PC-9 (cell line): ENCODE measurements at regions of chr15 and their contacts with region 1.

Region 1: DNA sequence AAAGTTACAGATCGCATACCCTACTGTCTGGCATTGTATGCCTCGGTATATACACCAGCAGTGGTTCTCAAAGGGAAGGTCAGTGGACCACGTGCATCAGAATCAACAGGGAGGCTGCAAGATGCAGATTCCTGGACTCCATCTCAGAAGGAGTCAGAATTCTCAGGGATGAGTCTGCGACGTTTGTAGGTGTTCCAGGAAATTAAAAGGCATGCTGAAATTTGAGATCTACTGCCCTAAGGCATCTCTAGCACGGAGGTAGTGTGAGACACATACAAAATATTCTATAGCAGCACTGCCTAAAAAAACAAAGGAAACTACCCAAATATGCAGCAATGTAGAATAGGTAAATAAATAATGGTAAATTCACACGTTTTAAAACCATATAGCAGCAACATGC is 136.8 kb upstream of the BNIP2 start:
- DNase-seq: peak; percentile 53 to 91
- H3K4me3 ChIP-seq: no peak overlapping the region
- H3K27ac ChIP-seq: peak overlapping the region; percentile 93
- H3K4me1 ChIP-seq: peaks cover 52% of the 10 kb centered on the region
- H3K27me3 ChIP-seq: no peaks in the 10 kb centered on the region
- CTCF ChIP-seq: no peak

Region 2: DNA sequence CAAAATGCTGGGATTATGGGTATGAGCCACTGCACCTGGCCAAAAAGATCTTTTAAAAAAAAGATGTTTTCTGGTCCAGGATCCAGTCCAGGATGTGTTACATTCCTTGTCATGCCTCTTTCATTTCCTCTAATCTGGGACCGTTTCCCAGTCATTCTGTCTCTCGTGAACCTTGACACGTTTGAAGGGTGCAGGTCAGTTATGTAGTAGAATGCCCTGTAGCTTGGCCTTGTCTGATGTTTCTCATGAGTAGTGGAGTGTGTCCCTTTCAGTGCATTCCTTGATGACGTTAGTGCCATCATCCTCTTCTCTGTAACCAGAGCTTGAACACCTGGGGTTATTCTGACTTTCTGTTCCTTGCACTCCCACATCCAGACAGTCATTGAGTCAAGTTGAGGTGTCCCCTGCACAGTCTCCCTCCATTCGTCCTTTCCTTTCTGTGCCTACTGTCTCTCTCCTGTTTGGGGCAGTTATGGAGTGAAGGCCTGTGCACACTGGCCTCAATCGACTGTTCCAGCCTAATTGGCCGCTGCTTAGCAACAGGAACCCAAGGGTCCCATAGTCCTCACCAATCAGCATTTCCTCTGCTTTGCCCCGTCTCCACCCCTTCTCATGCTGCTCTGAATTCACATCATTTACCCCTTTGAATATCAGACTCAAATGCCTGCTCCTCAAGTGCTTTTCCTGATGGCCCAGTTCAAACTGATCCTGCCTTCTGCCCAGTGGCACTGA is 382.4 kb before region 1 on chr15:
- CTCF ChIA-PET with region 1: no interaction called
- POLR2A ChIA-PET with region 1: no interaction called
- intact Hi-C with region 1: no loop called
- DNase-seq: no peak
- H3K4me3 ChIP-seq: no peak overlapping the region
- H3K27ac ChIP-seq: no peak overlapping the region
- H3K4me1 ChIP-seq: no peaks in the 10 kb centered on the region
- H3K27me3 ChIP-seq: no peaks in the 10 kb centered on the region
- CTCF ChIP-seq: no peak

Region 3: GRCh38 chr15:59570368-59570767 is 255.5 kb before region 1 on chr15:
- CTCF ChIA-PET with region 1: no interaction called
- POLR2A ChIA-PET with region 1: interaction called, 15 read pairs
- intact Hi-C with region 1: no loop called
- DNase-seq: peak; percentile 67 to 98
- H3K4me3 ChIP-seq: no peak overlapping the region
- H3K27ac ChIP-seq: peak overlapping the region; percentile 95
- H3K4me1 ChIP-seq: peaks cover 35% of the 10 kb centered on the region
- H3K27me3 ChIP-seq: no peaks in the 10 kb centered on the region
- CTCF ChIP-seq: no peak

Region 4: GRCh38 chr15:59797756-59798604 is 27.9 kb before region 1 on chr15:
- CTCF ChIA-PET with region 1: no interaction called
- POLR2A ChIA-PET with region 1: no interaction called
- intact Hi-C with region 1: loop called (anchors 1 kb)
- DNase-seq: no peak
- H3K4me3 ChIP-seq: no peak overlapping the region
- H3K27ac ChIP-seq: no peak overlapping the region
- H3K4me1 ChIP-seq: no peaks in the 10 kb centered on the region
- H3K27me3 ChIP-seq: no peaks in the 10 kb centered on the region
- CTCF ChIP-seq: no peak

Region 5: DNA sequence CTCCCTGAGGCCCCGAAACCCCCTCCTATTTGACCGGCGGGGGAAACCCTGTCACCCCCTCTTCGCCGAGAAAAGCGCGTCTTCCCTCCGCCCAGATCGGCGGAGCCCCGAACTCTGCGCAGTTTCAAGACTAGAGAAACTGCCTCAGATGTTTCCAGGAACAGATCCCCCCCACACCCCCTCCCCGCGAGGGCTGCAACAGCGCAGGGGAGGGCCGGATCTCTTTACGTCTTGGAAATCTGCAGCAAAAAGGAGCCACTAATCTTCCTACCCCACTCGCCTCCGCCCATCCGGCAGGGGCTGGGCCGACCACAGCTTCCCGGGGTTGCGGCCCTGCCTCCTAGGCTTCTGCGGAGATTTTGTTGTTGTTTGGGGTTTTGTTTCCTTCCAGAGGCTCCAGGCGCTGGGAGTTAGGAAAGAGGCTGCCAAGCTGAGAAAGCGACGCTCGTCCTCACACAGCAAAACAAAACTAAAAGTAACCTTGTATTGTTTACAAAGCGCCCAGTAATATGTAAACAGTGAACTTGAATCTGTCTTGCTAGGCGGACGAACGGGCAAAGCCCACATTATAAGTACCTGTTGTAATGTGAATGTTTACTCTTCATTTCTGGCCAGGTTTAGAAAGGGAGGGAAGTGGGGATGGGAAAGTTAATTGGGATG is 180.4 kb after region 1 on chr15:
- CTCF ChIA-PET with region 1: no interaction called
- POLR2A ChIA-PET with region 1: no interaction called
- intact Hi-C with region 1: loop called (anchors 5 kb)
- DNase-seq: peak; percentile 88 to 91
- H3K4me3 ChIP-seq: peak overlapping the region; percentile 82
- H3K27ac ChIP-seq: peak overlapping the region; percentile 95
- H3K4me1 ChIP-seq: peaks cover 28% of the 10 kb centered on the region
- H3K27me3 ChIP-seq: no peaks in the 10 kb centered on the region
- CTCF ChIP-seq: no peak

Region 6: GRCh38 chr15:60128000-60128376 is 302.1 kb after region 1 on chr15:
- CTCF ChIA-PET with region 1: no interaction called
- POLR2A ChIA-PET with region 1: interaction called, 31 read pairs
- intact Hi-C with region 1: loop called (anchors 1 kb)
- DNase-seq: peak in 1 of 2 experiments; percentile 63
- H3K4me3 ChIP-seq: peak overlapping the region; percentile 53
- H3K27ac ChIP-seq: peak overlapping the region; percentile 90
- H3K4me1 ChIP-seq: peaks cover 23% of the 10 kb centered on the region
- H3K27me3 ChIP-seq: no peaks in the 10 kb centered on the region
- CTCF ChIP-seq: no peak

Region 7: GRCh38 chr15:60374628-60375081 is 548.7 kb after region 1 on chr15:
- CTCF ChIA-PET with region 1: no interaction called
- POLR2A ChIA-PET with region 1: no interaction called
- intact Hi-C with region 1: loop called (anchors 5 kb)
- DNase-seq: peak; percentile 90 to 93
- H3K4me3 ChIP-seq: no peak overlapping the region
- H3K27ac ChIP-seq: peak overlapping the region; percentile 97
- H3K4me1 ChIP-seq: peaks cover 56% of the 10 kb centered on the region
- H3K27me3 ChIP-seq: no peaks in the 10 kb centered on the region
- CTCF ChIP-seq: no peak

Region 8: GRCh38 chr15:61227269-61227949 is 1401.5 kb after region 1 on chr15:
- CTCF ChIA-PET with region 1: no interaction called
- POLR2A ChIA-PET with region 1: interaction called, 20 read pairs
- intact Hi-C with region 1: no loop called
- DNase-seq: peak; percentile 4 to 60
- H3K4me3 ChIP-seq: peak overlapping the region; percentile 78
- H3K27ac ChIP-seq: no peak overlapping the region
- H3K4me1 ChIP-seq: no peaks in the 10 kb centered on the region
- H3K27me3 ChIP-seq: 0 out of 2 replicates have a peak, but pooled peaks cover 12% of the 10 kb centered on the region
- CTCF ChIP-seq: no peak